Right ventricle myocardium inferior (tissue), 1 donor: ENCODE measurements at regions of chr1 and their contacts with region 1.

Region 1: DNA sequence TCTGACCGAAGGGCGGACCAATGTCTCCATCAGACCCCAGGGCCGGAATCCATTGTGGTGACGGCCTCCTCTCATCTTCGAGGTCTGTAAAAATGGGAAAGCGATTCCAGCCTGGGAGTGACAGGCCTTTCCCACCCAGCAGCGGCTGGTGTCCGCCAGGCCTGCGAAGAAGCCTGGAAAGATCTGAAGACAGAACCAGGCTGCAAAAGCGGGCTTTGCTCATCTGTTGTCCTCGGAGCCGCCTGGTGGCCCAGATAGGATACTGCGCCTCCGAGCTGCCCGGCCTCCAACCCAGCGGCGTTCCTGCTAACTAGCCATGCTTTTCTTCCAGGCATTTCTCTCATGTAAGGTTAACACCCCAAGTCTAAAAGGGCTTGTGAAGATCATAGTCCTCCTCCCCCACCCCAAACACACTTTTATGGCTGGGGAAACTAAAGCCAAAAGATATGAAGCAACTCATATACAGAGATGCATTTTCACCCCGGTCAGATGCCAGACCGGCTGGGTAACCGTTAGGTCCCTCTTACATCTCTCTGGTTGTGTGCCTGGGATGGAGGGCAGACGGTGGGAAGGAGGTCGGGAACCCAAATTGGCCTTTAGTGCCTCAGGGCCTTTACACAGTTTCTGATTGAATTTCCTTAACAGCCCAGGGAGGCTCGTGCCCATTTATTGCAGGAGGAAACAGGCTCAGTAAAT is 1.9 kb upstream of the DHRS3 start:
- DNase-seq: peak; percentile 89
- ATAC-seq: peak; percentile 59

Region 2: GRCh38 chr1:12229835-12230548 is 389.9 kb before region 1 on chr1 and contains the start of gene VPS13D:
- intact Hi-C with region 1: loop called (anchors 1 kb)
- DNase-seq: peak; percentile 96
- ATAC-seq: peak; percentile 91
- total RNA-seq, gene VPS13D: 105 TPM

Region 3: GRCh38 chr1:12344596-12345349 is 275.2 kb before region 1 on chr1:
- intact Hi-C with region 1: loop called (anchors 10 kb)
- DNase-seq: no peak
- ATAC-seq: peak; percentile 56

Region 4: GRCh38 chr1:12376106-12377045 is 243.6 kb before region 1 on chr1:
- intact Hi-C with region 1: no loop called
- DNase-seq: no peak
- ATAC-seq: peak; percentile 57

Region 5: GRCh38 chr1:12454406-12455391 is 165.2 kb before region 1 on chr1:
- intact Hi-C with region 1: loop called (anchors 1 kb)
- DNase-seq: no peak
- ATAC-seq: peak; percentile 35

Region 6: DNA sequence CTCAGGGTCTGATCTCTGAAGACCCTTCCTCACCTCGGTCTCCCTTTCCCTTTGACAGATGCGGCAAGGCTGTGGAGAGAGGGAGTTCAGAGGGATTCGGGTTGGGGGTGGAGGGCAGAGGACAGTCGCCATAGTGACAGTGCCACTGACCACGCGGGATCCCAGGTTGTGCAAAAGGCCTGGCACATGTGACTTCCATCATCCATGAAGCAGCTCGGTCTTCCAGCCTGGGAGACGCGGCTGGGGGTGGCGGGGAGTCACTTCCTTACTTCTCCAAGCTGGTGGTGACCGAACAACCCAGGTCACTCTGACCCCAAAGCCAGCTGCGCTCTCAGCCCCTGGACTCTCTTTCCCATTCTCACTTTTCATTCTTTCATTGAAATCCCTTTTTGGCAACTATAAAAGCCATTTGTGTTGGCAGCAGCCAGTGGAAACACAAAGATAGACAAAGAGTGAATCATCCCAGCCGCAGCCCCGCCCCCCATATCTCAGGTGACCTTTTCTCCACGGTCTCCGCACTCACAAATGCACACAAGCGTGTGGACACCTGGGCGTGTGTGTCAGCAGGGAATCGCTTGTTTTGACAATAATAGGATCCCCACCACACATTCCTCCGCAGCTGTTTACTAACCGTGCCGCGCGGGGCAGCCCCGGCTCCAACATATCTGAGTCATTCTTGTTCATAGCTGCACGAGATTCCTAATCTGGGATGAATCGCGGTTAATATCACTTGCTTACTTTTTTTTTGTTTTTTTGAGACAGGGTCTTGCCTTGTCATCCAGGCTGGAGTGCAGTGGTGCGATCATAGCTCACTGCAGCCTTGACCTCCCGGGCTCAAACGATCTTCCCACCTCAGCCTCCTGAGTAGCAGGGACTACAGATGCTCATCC is 70.2 kb before region 1 on chr1:
- intact Hi-C with region 1: loop called (anchors 5 kb)
- DNase-seq: no peak
- ATAC-seq: peak; percentile 14

Region 7: GRCh38 chr1:12658531-12659453 is 38.9 kb after region 1 on chr1:
- intact Hi-C with region 1: loop called (anchors 2 kb)
- DNase-seq: no peak
- ATAC-seq: peak; percentile 70